MCF 10A (cell line): ENCODE measurements at regions of chr9 and their contacts with region 1.

Region 1: DNA sequence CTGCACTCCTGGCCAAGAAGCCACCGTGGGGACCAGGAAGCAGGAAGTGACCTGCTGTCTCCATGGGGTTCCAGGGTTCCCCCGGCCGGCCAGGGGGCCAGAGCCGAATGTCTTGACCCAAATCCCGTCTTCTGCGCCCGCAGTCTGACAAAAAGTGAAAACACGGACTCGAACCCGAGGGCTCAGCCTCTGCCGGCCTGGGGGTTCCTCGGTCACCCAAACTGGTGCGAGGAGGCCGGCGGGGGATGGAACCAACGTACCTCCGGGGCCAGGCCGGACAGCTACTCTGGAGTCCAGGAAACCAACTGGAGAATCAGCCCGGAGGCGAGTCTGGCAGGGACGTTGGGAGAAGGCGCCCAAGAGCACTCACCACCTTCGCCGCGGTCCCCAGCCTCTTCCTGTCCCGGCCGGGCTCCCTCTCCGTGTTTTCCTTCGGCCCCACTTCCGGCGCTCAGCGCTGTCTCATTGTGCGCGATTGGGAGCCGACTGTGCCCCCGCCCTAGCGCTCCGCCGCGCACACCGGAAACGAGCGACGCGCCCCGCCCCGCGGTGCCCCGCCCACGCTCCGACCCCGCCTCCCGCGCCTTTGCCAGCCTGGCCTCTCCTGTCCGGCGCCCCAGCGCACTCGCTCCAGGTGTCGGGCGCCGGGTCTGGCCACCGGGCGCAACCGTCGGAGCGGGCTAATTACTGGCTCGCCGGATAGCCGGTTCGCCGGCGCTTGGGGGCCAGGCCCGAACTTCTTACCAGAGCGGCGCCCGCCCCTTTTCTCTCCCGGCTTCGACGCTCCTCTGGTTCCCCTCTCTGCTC is at the start of gene TUT7:
- DNase-seq: peak; percentile 96
- H3K4me3 Mint-ChIP-seq: peak within 1 kb of the TSS; percentile 100
- H3K27ac Mint-ChIP-seq: peak within 1 kb of the TSS; percentile 99
- H3K4me1 Mint-ChIP-seq: peaks cover 23% of the 10 kb centered on the region
- H3K27me3 Mint-ChIP-seq: no peaks in the 10 kb centered on the region
- CTCF ChIP-seq: no peak
- total RNA-seq, gene TUT7: 35.9 and 37.4 TPM in 2 replicates

Region 2: DNA sequence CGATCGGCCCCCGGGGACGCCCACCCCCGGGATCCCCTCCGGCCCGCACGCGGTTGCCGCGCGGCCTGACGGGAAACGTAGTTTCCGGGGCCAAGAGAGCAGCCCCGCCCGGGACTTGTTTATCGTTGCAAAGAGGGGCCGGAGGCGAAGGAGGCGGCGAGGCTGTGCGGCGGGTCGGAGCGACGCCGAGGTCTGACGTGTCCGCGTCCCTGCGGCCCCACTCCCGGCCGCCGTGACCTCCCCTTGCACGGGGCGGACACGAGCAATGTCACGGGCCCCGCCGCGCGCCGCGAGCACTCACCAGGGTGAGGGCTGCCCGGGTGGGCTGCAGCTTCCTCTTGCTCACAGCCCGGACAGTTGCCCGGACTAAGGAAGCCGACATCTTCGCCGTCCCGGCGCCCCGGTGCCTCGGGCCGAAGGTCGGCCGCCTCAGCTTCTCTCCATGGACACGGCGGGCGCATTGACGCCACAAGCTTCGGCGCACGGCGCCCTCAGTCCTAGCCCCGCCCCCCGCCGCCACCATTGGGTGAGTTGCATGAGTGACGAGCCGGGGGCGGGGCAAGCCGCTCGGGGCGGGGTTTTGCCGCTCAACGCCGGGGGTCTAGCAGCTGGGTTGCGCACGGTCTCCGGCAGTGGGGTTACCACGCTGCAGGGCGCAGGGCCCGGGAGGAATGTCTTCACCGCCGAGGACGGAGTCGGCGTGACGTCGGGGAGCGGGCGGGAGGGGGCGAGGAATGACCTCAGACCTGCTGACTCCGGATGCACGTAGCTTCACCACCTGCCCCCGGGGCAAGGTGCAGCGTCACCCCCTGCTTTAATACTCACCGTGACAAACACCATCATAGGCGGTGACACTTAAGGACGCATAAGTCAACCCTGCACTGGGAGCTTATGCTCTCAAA is 71.9 kb before region 1 on chr9 and contains the start of gene ISCA1:
- CTCF ChIA-PET with region 1: no interaction called
- POLR2A ChIA-PET with region 1: interaction called, 12 read pairs
- intact Hi-C with region 1: loop called (anchors 2 kb)
- DNase-seq: peak; percentile 95
- H3K4me3 Mint-ChIP-seq: peak within 1 kb of the TSS; percentile 80
- H3K27ac Mint-ChIP-seq: peak within 1 kb of the TSS; percentile 93
- H3K4me1 Mint-ChIP-seq: peaks cover 24% of the 10 kb centered on the region
- H3K27me3 Mint-ChIP-seq: no peaks in the 10 kb centered on the region
- CTCF ChIP-seq: no peak
- total RNA-seq, gene ISCA1: 24.7 and 31.1 TPM in 2 replicates

Region 3: GRCh38 chr9:86298873-86299272 is 55.3 kb before region 1 on chr9:
- CTCF ChIA-PET with region 1: no interaction called
- POLR2A ChIA-PET with region 1: no interaction called
- intact Hi-C with region 1: loop called (anchors 5 kb)
- DNase-seq: no peak
- H3K4me3 Mint-ChIP-seq: no peak overlapping the region
- H3K27ac Mint-ChIP-seq: no peak overlapping the region
- H3K4me1 Mint-ChIP-seq: peaks cover 21% of the 10 kb centered on the region
- H3K27me3 Mint-ChIP-seq: no peaks in the 10 kb centered on the region
- CTCF ChIP-seq: no peak

Region 4: DNA sequence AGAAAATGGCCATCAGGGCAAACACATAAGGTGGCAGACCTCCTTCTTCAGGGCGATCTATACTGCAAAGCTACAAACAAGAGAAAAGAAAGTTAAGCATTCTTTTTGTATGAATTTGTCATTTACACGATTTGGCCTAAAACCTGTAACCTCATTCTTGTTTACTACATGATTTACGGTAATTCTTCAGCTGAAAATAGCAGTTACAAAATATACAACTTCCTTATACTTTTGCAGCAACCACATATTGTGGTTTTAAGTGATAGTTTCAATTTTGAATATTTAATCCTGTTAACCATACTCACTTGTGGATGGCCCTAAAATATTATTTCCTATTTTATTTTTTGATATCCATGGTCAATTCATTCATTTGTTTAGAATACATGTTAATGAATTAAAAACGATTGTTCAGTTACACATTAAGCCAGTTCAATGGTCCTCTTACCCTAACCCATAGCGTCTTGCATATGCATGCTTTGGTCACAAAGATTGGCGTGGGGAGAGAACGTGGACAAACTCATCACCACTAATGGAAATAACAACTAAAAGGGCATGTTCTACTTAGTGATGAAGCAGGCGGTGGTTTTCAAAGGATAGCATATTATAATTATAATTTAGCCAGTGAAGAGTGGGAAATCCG is 16.6 kb before region 1 on chr9:
- CTCF ChIA-PET with region 1: interaction called, 4 read pairs
- POLR2A ChIA-PET with region 1: interaction called, 30 read pairs
- intact Hi-C with region 1: no loop called
- DNase-seq: no peak
- H3K4me3 Mint-ChIP-seq: no peak overlapping the region
- H3K27ac Mint-ChIP-seq: no peak overlapping the region
- H3K4me1 Mint-ChIP-seq: peaks cover 11% of the 10 kb centered on the region
- H3K27me3 Mint-ChIP-seq: no peaks in the 10 kb centered on the region
- CTCF ChIP-seq: no peak

Region 5: GRCh38 chr9:86368871-86369521 is 14.8 kb after region 1 on chr9:
- CTCF ChIA-PET with region 1: interaction called, 4 read pairs
- POLR2A ChIA-PET with region 1: interaction called, 124 read pairs
- intact Hi-C with region 1: no loop called
- DNase-seq: peak; percentile 93
- H3K4me3 Mint-ChIP-seq: peak overlapping the region; percentile 21
- H3K27ac Mint-ChIP-seq: peak overlapping the region; percentile 97
- H3K4me1 Mint-ChIP-seq: peaks cover 26% of the 10 kb centered on the region
- H3K27me3 Mint-ChIP-seq: no peaks in the 10 kb centered on the region
- CTCF ChIP-seq: no peak